CD4-positive, alpha-beta memory T cell (primary cell): ENCODE measurements at regions of chr4 and their contacts with region 1.

Region 1: DNA sequence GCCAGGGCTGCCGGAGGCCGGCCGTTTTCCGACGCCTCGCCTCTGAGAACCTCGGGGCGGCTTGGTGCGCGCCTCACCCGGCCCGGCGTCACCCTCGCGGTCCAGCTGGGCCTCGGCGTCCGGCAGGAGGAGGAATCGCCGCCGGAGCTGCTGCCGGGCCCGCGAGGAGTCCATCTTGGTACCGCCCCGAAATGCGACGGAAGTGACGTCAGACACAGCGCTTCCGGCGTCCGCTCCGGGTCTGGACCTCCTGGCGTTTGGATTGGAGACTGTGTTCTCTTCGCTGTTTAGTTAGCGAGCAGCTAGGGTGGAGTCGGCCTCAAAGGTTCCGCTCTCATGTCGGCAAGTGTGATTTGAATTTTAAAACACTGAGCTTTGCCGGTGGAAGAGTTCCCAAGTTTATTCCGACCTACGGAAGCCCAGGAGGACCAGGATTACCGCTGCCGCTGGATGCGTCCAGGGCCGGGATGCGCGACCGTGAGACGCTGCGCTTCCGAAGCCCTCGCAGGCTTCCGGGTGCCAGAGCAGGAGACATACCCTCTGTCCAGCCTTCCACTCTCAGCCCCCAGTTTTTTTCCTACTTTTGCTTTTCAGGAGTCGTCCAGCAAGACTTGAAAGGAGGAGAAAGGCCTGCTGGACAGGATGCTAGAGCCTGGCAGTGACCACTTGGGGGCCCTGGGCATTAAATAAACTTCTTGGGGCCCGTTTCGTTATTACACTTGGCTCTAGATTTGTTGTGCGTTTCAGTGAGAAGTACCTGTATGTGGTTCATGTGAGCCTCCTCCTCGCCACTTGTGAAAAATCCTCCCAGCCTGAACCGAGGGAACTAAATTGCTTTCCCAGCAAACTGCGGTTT is at the start of gene TMEM128:
- DNase-seq: peak; percentile 90 to 94 (median 91)
- H3K4me3 ChIP-seq: peak within 1 kb of the TSS; percentile 95 to 97
- H3K4me3 Mint-ChIP-seq: peak within 1 kb of the TSS; percentile 91 to 98 (median 96)
- H3K27ac ChIP-seq: peak within 1 kb of the TSS; percentile 80
- H3K27ac Mint-ChIP-seq: peak within 1 kb of the TSS; percentile 98 to 99 (median 99)
- H3K4me1 ChIP-seq: peaks cover 18% of the 10 kb centered on the region
- H3K4me1 Mint-ChIP-seq: peaks cover 26 to 45% (median 31%) of the 10 kb centered on the region in 4 donors
- H3K27me3 ChIP-seq: no peaks in the 10 kb centered on the region
- H3K27me3 Mint-ChIP-seq: no peaks in the 10 kb centered on the region
- total RNA-seq, gene TMEM128: 20.0 to 20.7 TPM

Region 2: GRCh38 chr4:3688018-3688998 is 559.9 kb before region 1 on chr4:
- CTCF ChIA-PET with region 1: no interaction called
- POLR2A ChIA-PET with region 1: no interaction called
- intact Hi-C with region 1: no loop called
- DNase-seq: no peak
- H3K4me3 ChIP-seq: no peak overlapping the region
- H3K4me3 Mint-ChIP-seq: no peak overlapping the region
- H3K27ac ChIP-seq: no peak overlapping the region
- H3K27ac Mint-ChIP-seq: no peak overlapping the region
- H3K4me1 ChIP-seq: no peaks in the 10 kb centered on the region
- H3K4me1 Mint-ChIP-seq: no peaks in the 10 kb centered on the region
- H3K27me3 ChIP-seq: no peaks in the 10 kb centered on the region
- H3K27me3 Mint-ChIP-seq: no peaks in the 10 kb centered on the region

Region 3: GRCh38 chr4:4260253-4260652 is 12.0 kb after region 1 on chr4:
- CTCF ChIA-PET with region 1: interaction called, 35 read pairs
- POLR2A ChIA-PET with region 1: interaction called, 23 read pairs
- intact Hi-C with region 1: no loop called
- DNase-seq: peak; percentile 49 to 72 (median 64)
- H3K4me3 ChIP-seq: no peak overlapping the region
- H3K4me3 Mint-ChIP-seq: no peak overlapping the region
- H3K27ac ChIP-seq: no peak overlapping the region
- H3K27ac Mint-ChIP-seq: peak overlapping the region in 5 of 7 donors; percentile 21 to 83 (median 68)
- H3K4me1 ChIP-seq: no peaks in the 10 kb centered on the region
- H3K4me1 Mint-ChIP-seq: peaks cover 4 to 11% (median 8%) of the 10 kb centered on the region in 4 donors
- H3K27me3 ChIP-seq: no peaks in the 10 kb centered on the region
- H3K27me3 Mint-ChIP-seq: no peaks in the 10 kb centered on the region

Region 4: DNA sequence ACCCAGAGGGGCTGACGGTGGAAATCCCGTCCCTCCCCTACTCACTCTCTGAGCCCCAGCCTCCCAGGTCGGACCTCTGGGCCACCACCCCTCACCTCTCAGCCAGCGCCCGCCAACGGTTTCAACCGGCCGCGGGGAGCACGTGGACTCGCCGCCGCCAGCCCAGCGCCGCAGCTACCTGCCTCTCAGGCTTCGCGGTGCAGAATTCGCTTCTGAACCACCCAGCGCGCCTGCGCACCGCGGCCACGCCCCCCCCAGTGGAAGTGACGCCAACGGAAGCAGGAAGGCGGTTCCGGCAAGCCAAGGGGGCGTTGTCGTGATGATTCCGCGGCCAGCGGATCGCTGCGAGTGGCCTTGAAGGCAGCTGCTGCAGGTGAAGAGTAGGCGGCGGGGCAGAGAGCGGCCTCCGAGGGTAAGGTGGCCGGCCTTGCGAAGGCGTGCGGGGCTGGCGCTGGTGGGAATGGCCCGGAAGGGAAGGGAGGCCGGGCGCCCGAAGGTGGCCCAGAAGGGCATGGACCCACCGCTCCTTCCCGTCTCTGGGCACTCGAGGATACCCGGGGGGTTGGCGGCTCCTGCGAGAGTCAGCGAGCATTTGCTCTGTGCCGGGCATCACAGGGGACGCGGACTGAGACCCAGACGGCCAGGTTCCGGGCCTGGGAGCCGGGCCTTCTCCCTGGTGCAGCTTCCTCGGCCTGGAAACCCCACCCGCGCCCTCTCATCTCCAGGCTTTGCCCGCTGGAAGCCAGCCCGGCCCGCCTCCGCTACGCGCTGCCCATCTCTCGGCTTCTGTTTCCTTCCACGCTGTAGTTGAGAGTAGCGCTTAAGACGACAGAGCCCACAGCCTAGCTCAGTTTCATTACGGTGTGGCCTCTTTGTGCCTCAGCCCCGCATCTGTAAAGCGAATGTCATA is 41.9 kb after region 1 on chr4 and contains the starts of genes LYAR and ZBTB49:
- CTCF ChIA-PET with region 1: interaction called, 5 read pairs
- POLR2A ChIA-PET with region 1: interaction called, 18 read pairs
- intact Hi-C with region 1: loop called (anchors 1 kb)
- DNase-seq: peak; percentile 96 to 98 (median 97)
- H3K4me3 ChIP-seq: peak within 1 kb of the TSS; percentile 86 to 93
- H3K4me3 Mint-ChIP-seq: peak within 1 kb of the TSS; percentile 93 to 98 (median 96)
- H3K27ac ChIP-seq: peak within 1 kb of the TSS; percentile 76
- H3K27ac Mint-ChIP-seq: peak within 1 kb of the TSS; percentile 83 to 96 (median 94)
- H3K4me1 ChIP-seq: peaks cover 30% of the 10 kb centered on the region
- H3K4me1 Mint-ChIP-seq: peaks cover 48 to 83% (median 64%) of the 10 kb centered on the region in 4 donors
- H3K27me3 ChIP-seq: no peaks in the 10 kb centered on the region
- H3K27me3 Mint-ChIP-seq: no peaks in the 10 kb centered on the region
- total RNA-seq, gene LYAR: 74.5 to 79.8 TPM
- total RNA-seq, gene ZBTB49: 18.5 to 20.0 TPM

Region 5: DNA sequence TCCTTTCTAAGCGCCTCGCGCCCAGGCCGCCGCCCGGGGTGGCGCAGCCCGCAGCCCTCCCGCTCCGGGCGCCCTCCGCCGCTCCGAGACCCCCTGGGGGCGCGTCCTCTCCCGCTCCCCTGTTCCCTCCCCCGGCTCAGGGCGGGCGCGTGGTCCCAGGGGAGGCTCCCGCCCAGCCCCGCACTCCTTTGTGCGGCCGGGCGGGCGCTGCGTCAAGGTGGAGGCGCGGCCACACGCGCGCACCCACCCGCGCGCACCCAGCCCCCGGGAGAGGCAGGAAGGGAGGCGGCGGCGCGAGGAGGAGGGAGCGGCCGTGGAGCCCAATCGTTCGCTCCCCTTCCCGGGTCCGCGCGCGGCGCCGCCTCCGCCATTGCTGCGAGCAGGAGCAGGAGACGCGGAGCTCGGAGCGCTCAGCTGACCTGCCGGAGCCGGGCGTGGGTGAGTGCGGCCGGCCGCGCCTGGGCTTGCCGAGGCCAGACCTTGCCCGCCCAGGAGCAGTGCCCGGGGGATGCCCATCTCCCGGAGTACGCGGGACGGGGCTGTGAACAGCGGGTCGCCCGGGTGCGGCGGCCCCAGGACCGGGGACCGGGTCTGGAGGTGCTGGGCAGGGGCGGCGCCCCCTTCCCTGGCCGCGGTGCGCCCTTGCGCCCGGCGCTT is 138.6 kb after region 1 on chr4 and contains the start of gene NSG1:
- CTCF ChIA-PET with region 1: no interaction called
- POLR2A ChIA-PET with region 1: no interaction called
- intact Hi-C with region 1: loop called (anchors 1 kb)
- DNase-seq: peak; percentile 40 to 66 (median 45)
- H3K4me3 ChIP-seq: peak within 1 kb of the TSS; percentile 47 to 54
- H3K4me3 Mint-ChIP-seq: peak within 1 kb of the TSS; percentile 85 to 96 (median 90)
- H3K27ac ChIP-seq: peak within 1 kb of the TSS; percentile 15
- H3K27ac Mint-ChIP-seq: peak within 1 kb of the TSS; percentile 35 to 78 (median 76)
- H3K4me1 ChIP-seq: peaks cover 19% of the 10 kb centered on the region
- H3K4me1 Mint-ChIP-seq: peaks cover 11 to 30% (median 18%) of the 10 kb centered on the region in 4 donors
- H3K27me3 ChIP-seq: no peaks in the 10 kb centered on the region
- H3K27me3 Mint-ChIP-seq: peaks cover 0 to 4% of the 10 kb centered on the region in 2 donors
- total RNA-seq, gene NSG1: 74.9 to 75.1 TPM

Region 6: GRCh38 chr4:4461850-4462249 is 213.6 kb after region 1 on chr4:
- CTCF ChIA-PET with region 1: no interaction called
- POLR2A ChIA-PET with region 1: interaction called, 17 read pairs
- intact Hi-C with region 1: no loop called
- DNase-seq: peak; percentile 73 to 91 (median 87)
- H3K4me3 ChIP-seq: no peak overlapping the region
- H3K4me3 Mint-ChIP-seq: peak overlapping the region; percentile 73 to 91 (median 82)
- H3K27ac ChIP-seq: peak overlapping the region; percentile 52
- H3K27ac Mint-ChIP-seq: peak overlapping the region; percentile 92 to 99 (median 95)
- H3K4me1 ChIP-seq: peaks cover 48% of the 10 kb centered on the region
- H3K4me1 Mint-ChIP-seq: peaks cover 34 to 65% (median 51%) of the 10 kb centered on the region in 4 donors
- H3K27me3 ChIP-seq: no peaks in the 10 kb centered on the region
- H3K27me3 Mint-ChIP-seq: no peaks in the 10 kb centered on the region